Uterus (tissue), 4 donors: ENCODE measurements at regions of chr14 and their contacts with region 1.

Region 1: GRCh38 chr14:105045710-105046326 is 19.4 kb downstream of the GPR132 start:
- DNase-seq: peak; percentile 88 to 91
- H3K4me3 ChIP-seq: no peak overlapping the region
- H3K27ac ChIP-seq: no peak overlapping the region
- H3K4me1 ChIP-seq: peaks cover 0 to 6% of the 10 kb centered on the region in 2 donors
- H3K27me3 ChIP-seq: no peaks in the 10 kb centered on the region
- CTCF ChIP-seq: peak; percentile 100
- POLR2A ChIP-seq: no peak

Region 2: GRCh38 chr14:104895786-104896661 is 149.8 kb before region 1 on chr14:
- intact Hi-C with region 1: loop called (anchors 5 kb)
- DNase-seq: peak; percentile 18 to 29
- H3K4me3 ChIP-seq: no peak overlapping the region
- H3K27ac ChIP-seq: no peak overlapping the region
- H3K4me1 ChIP-seq: no peaks in the 10 kb centered on the region
- H3K27me3 ChIP-seq: no peaks in the 10 kb centered on the region
- CTCF ChIP-seq: no peak
- POLR2A ChIP-seq: no peak

Region 3: DNA sequence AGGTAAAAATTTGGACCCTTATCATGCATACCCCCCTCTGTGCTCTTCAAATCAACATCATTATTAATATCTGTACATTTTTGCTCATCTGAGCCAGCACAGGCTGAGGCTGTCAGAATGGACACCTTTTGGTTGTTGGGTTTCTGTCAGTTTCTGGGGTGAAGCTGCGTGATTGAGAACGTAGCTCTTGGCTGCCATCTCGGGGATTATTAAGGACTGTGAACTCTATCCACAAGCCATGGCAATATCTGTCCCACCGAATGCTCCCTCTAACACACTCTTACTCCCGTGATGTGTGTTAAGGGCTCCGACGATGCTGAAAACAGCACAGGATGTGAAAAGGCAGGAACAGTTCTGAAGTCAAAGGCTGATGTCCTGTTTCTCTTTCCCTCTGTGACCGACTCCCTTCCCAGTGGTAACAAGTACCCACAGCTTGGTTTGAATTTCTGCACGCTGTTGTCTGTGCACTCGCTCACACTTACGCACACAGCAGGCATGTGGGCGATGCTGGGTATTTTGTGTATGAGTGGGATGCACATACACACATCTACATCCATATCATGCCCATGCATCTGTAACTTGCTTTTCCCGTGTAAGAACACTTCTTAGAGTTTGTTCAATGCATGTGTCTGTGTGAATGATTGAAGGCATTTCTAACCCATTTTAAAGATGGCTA is 886.1 kb after region 1 on chr14:
- intact Hi-C with region 1: no loop called
- DNase-seq: no peak
- H3K4me3 ChIP-seq: no peak overlapping the region
- H3K27ac ChIP-seq: no peak overlapping the region
- H3K4me1 ChIP-seq: no peaks in the 10 kb centered on the region
- H3K27me3 ChIP-seq: no peaks in the 10 kb centered on the region
- CTCF ChIP-seq: no peak
- POLR2A ChIP-seq: no peak